Ovary (tissue), 10 donors: ENCODE measurements at regions of chr12 and their contacts with region 1.

Region 1: GRCh38 chr12:87344699-87345098 is 684.5 kb downstream of the C12orf50 start:
- DNase-seq: no peak
- H3K4me3 ChIP-seq: no peak overlapping the region
- H3K27ac ChIP-seq: no peak overlapping the region
- H3K4me1 ChIP-seq: no peaks in the 10 kb centered on the region
- H3K27me3 ChIP-seq: no peaks in the 10 kb centered on the region
- CTCF ChIP-seq: no peak
- EP300 ChIP-seq: no peak
- POLR2A ChIP-seq: no peak

Region 2: GRCh38 chr12:86788661-86789060 is 556.0 kb before region 1 on chr12:
- intact Hi-C with region 1: no loop called
- DNase-seq: no peak
- H3K4me3 ChIP-seq: no peak overlapping the region
- H3K27ac ChIP-seq: no peak overlapping the region
- H3K4me1 ChIP-seq: no peaks in the 10 kb centered on the region
- H3K27me3 ChIP-seq: no peaks in the 10 kb centered on the region
- CTCF ChIP-seq: no peak
- EP300 ChIP-seq: no peak
- POLR2A ChIP-seq: no peak

Region 3: GRCh38 chr12:87246726-87247125 is 98.0 kb before region 1 on chr12:
- intact Hi-C with region 1: no loop called
- DNase-seq: no peak
- H3K4me3 ChIP-seq: no peak overlapping the region
- H3K27ac ChIP-seq: no peak overlapping the region
- H3K4me1 ChIP-seq: no peaks in the 10 kb centered on the region
- H3K27me3 ChIP-seq: no peaks in the 10 kb centered on the region
- CTCF ChIP-seq: no peak
- EP300 ChIP-seq: no peak
- POLR2A ChIP-seq: no peak

Region 4: GRCh38 chr12:87274594-87275245 is 70.0 kb before region 1 on chr12:
- intact Hi-C with region 1: no loop called
- DNase-seq: no peak
- H3K4me3 ChIP-seq: no peak overlapping the region
- H3K27ac ChIP-seq: no peak overlapping the region
- H3K4me1 ChIP-seq: no peaks in the 10 kb centered on the region
- H3K27me3 ChIP-seq: no peaks in the 10 kb centered on the region
- CTCF ChIP-seq: no peak
- EP300 ChIP-seq: no peak
- POLR2A ChIP-seq: no peak

Region 5: GRCh38 chr12:89192428-89192827 is 1847.7 kb after region 1 on chr12:
- intact Hi-C with region 1: loop called in 1 of 4 experiments (anchors 10 kb)
- DNase-seq: no peak
- H3K4me3 ChIP-seq: no peak overlapping the region
- H3K27ac ChIP-seq: no peak overlapping the region
- H3K4me1 ChIP-seq: no peaks in the 10 kb centered on the region
- H3K27me3 ChIP-seq: no peaks in the 10 kb centered on the region
- CTCF ChIP-seq: no peak
- EP300 ChIP-seq: no peak
- POLR2A ChIP-seq: no peak